Colonic mucosa (tissue), 4 donors: ENCODE measurements at regions of chr17 and their contacts with region 1.

Region 1: DNA sequence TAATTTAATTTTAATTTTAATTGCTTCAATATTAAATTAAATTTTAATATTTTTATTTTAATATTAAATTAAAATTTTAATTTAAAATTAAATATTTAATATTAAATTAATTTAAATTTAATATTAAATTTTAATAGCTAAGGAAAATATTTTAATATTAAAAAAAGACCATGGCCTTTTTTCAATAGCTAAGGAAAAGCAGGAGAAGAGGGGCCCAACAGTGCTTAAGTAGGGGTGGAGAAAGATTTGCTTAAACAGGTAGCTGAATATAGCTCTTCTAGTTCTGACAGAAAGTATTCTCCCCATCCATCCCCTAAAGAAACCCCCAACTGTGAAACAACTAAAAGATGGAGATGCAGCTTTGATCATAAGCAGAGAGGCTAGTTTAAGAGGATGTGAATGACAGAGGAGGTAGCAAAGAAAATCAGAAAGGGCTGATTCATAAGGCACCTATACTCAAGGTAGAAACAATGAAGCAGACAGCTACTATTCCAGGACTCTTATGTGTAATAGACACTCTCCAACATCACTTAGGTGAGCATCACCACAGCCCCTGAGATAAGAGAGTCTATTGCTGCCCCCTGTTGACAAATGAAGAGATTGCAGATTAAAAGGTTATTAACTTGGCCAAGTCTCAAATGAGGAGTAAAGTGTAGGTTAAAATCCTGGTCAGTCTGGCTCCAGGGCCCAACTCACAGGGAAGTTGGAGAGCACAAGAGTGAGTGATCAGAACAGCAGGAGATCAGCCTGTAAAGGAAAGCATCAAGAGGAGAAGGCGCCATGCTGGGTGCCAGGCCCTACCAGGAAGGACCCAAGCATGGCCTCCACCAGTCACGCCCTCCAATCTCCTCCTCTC is 7.8 kb upstream of the RNASEK start:
- DNase-seq: peak; percentile 36
- H3K4me3 ChIP-seq: no peak overlapping the region
- H3K27ac ChIP-seq: no peak overlapping the region
- H3K4me1 ChIP-seq: no peaks in the 10 kb centered on the region
- H3K27me3 ChIP-seq: no peaks in the 10 kb centered on the region
- CTCF ChIP-seq: peak; percentile 56

Region 2: GRCh38 chr17:6666077-6666521 is 338.5 kb before region 1 on chr17:
- intact Hi-C with region 1: loop called (anchors 5 kb)
- DNase-seq: peak; percentile 72
- H3K4me3 ChIP-seq: no peak overlapping the region
- H3K27ac ChIP-seq: no peak overlapping the region
- H3K4me1 ChIP-seq: no peaks in the 10 kb centered on the region
- H3K27me3 ChIP-seq: no peaks in the 10 kb centered on the region
- CTCF ChIP-seq: peak; percentile 78

Region 3: DNA sequence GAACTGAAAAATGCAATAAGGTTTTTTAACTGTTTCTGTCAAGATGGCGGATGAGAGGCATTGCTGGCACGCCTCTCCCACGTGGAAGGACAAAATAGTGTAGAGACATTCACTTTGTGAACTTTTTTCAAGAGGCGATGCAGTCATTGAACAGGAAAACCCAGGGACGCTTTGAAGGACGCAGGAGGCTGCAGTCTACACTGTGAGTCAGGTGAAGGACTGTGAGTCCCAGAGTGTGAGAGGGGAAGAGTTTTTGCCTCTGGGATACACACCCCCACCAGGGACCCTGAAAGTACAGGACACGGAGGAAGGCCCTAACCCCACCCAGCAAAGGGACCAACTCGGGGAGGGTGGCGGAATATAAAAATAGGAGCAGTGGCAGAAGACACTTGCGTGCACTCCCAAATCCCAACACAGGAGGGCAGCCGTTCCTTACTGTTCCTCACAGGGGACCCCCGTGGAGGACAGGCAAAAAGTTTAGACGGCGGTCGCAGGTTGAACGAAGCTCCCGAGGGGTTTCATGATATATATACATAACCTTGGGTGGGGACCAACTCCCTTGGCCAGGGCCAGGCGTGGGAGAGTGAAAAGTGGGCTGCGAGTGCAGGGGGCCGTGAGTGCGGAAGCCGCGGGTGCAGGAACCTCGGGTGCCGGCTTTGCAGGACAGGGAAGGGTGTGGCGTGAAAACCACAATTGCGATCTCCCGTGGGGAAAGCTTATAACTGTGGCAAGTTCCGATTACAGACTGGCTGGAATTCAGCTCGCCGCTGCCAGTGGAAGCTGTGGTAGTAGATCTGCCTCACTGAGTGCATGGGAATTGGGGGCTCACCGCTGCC is 90.8 kb before region 1 on chr17:
- intact Hi-C with region 1: loop called (anchors 2 kb)
- DNase-seq: peak; percentile 78
- H3K4me3 ChIP-seq: peak overlapping the region; percentile 14
- H3K27ac ChIP-seq: no peak overlapping the region
- H3K4me1 ChIP-seq: no peaks in the 10 kb centered on the region
- H3K27me3 ChIP-seq: no peaks in the 10 kb centered on the region
- CTCF ChIP-seq: peak; percentile 70